HEK293 (cell line): ENCODE measurements at regions of chr3 and their contacts with region 1.

Region 1: DNA sequence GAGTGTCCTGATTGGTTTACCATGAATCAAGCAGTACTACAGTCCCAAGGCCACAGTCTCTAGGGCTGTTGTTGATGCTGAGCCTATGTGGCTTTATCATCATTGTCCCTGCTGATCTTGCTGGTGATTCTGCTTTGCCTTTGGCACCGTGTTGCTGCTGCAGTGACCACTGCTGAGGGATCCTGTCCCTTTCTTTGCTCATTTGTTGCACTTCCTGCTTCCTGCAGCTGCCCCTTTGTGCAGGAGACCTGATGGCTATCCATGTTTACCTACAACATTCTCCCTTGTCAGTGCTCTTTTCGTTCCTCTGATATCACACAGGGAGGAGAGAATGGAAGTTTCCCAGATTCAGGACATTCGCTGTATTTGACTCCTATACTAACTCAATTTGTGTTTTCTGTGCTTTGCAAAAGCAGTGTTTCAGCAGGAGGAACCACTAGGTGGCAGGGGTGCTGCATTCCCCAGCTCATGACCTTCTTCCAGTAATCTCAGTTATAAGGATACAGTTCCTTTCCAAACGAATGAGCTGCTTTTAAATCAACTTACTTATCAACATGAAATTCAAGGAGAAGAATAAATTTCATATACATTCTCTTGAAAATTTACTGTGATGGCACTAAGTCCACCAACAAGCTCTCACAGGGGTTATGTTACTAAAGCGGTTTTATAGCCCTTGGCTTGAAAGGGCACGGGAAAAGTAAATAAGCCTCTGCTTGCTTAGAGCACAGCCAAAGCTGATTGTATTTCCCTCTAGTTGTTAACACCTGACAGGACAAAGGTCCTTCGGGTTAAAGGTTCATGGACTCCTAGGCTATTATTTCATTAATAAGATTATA is 9.7 kb upstream of the THUMPD3 start:
- H3K4me3 ChIP-seq: no peak overlapping the region
- H3K27ac ChIP-seq: no peak overlapping the region
- H3K4me1 ChIP-seq: peaks cover 3% of the 10 kb centered on the region; the same call in 1 of the 2 replicates
- CTCF ChIP-seq: peak; percentile 66

Region 2: GRCh38 chr3:9503283-9503682 is 150.1 kb after region 1 on chr3:
- CTCF ChIA-PET with region 1: interaction called, 21 read pairs
- POLR2A ChIA-PET with region 1: no interaction called
- H3K4me3 ChIP-seq: no peak overlapping the region
- H3K27ac ChIP-seq: no peak overlapping the region
- H3K4me1 ChIP-seq: no peaks in the 10 kb centered on the region
- CTCF ChIP-seq: peak; percentile 73